Heart left ventricle (tissue), 16 donors: ENCODE measurements at regions of chr7 and their contacts with region 1.

Region 1: GRCh38 chr7:13279854-13280435 is 592.5 kb downstream of the ARL4A start:
- DNase-seq: no peak
- ATAC-seq: no peak
- H3K4me3 ChIP-seq: no peak overlapping the region
- H3K27ac ChIP-seq: no peak overlapping the region
- H3K4me1 ChIP-seq: no peaks in the 10 kb centered on the region
- H3K27me3 ChIP-seq: no peaks in the 10 kb centered on the region
- CTCF ChIP-seq: peak; percentile 29 to 66 (median 52)
- POLR2A ChIP-seq: no peak

Region 2: DNA sequence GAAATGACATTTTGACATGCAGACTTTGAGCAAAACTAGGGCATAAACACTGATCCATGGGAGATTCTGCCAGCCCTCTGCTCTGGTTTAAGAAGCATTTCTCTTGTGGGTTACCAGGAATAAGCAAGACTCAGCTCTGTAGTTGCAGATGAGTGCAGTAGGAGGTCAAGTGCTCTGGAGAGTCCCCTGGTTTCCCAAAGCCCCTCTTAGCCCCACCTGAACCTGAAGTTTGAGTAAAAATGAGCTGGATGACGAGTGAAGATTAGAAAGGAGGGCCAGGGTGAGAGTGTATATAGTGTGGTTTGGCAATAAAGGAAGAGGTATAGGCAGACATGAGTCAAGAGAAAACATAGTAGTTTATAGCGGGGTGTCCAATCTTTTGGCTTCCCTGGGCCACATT is 372.2 kb before region 1 on chr7:
- intact Hi-C with region 1: no loop called
- DNase-seq: no peak
- ATAC-seq: no peak
- H3K4me3 ChIP-seq: no peak overlapping the region
- H3K27ac ChIP-seq: no peak overlapping the region
- H3K4me1 ChIP-seq: no peaks in the 10 kb centered on the region
- H3K27me3 ChIP-seq: no peaks in the 10 kb centered on the region
- CTCF ChIP-seq: no peak
- POLR2A ChIP-seq: no peak

Region 3: DNA sequence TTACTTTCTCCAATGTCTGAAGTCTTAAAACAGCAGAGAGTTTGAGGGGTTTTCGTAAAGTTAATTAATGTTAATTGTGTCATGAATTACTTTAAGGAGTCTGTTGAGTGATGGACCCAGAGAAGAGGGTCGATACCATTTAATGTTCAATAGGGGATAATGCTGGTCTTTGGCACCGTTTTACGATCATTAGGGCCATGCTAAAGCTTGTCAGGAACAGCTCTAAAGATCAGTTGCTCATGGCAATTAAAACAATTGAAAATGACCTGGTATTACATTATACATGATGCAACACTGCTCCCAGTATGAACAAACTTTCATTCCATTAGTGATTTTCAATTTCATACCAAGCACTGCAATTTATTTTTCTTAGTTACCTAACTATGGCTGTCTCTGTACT is 412.6 kb after region 1 on chr7:
- intact Hi-C with region 1: no loop called
- DNase-seq: no peak
- ATAC-seq: no peak
- H3K4me3 ChIP-seq: no peak overlapping the region
- H3K27ac ChIP-seq: no peak overlapping the region
- H3K4me1 ChIP-seq: no peaks in the 10 kb centered on the region
- H3K27me3 ChIP-seq: no peaks in the 10 kb centered on the region
- CTCF ChIP-seq: no peak
- POLR2A ChIP-seq: no peak

Region 4: GRCh38 chr7:13742811-13743210 is 462.9 kb after region 1 on chr7:
- intact Hi-C with region 1: loop called in 8 of 10 experiments (anchors 5 to 10 kb)
- DNase-seq: peak in 3 of 5 donors; percentile 16 to 48 (median 29)
- ATAC-seq: peak in 3 of 4 donors; percentile 75 to 79 (median 78)
- H3K4me3 ChIP-seq: no peak overlapping the region
- H3K27ac ChIP-seq: peak overlapping the region in 1 of 12 donors; percentile 12
- H3K4me1 ChIP-seq: peaks cover 0 to 13% (median 7%) of the 10 kb centered on the region in 12 donors
- H3K27me3 ChIP-seq: no peaks in the 10 kb centered on the region
- CTCF ChIP-seq: peak; percentile 24 to 66 (median 52)
- POLR2A ChIP-seq: no peak

Region 5: DNA sequence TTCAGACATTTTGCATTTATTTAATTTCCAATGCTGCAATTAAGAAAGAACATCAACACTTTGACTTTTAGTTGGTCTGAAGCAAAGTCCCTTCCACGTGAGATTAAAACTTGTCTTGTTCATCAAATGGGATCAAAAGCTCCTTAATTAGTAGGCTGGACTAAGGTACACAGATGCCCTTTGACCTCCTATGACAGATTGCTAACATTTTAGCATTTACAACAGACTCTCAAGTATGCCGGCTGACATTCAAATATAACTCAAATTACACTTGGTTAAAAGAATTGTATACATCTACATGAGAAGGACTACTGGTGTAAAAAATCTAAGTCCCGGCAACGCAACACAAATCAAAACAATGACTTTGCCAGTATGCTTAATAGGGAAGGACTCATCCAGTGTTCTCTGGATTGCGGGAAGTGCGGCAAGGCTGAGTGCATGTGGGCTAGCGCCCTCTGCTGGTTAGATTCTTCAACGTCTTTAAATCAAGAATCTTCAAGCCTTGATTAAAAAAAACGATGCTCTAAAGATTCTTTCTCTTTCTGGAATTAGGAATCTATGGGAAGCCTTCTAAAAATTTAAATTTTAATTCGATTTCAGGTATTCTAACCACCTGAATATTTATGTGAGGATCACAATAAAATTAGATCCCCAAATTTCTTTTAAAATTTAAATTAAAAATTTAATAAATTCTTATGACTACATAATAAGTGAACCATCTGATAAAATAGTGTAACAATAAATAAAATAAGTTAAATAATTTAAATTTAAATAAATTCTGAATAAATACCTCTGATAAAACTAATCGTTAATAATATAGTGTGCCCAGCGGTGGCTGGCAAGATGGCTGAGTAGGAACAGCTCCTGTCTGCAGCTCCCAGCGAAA is 1177.9 kb after region 1 on chr7:
- intact Hi-C with region 1: loop called in 8 of 10 experiments (anchors 2 to 10 kb)
- DNase-seq: peak; percentile 66 to 72 (median 68)
- ATAC-seq: peak; percentile 73 to 85 (median 84)
- H3K4me3 ChIP-seq: peak overlapping the region in 3 of 12 donors; percentile 1 to 31 (median 22)
- H3K27ac ChIP-seq: peak overlapping the region in 2 of 12 donors; percentile 34 to 54
- H3K4me1 ChIP-seq: peaks cover 0 to 5% (median 0%) of the 10 kb centered on the region in 12 donors
- H3K27me3 ChIP-seq: no peaks in the 10 kb centered on the region
- CTCF ChIP-seq: peak; percentile 81 to 93 (median 88)
- POLR2A ChIP-seq: no peak

Region 6: DNA sequence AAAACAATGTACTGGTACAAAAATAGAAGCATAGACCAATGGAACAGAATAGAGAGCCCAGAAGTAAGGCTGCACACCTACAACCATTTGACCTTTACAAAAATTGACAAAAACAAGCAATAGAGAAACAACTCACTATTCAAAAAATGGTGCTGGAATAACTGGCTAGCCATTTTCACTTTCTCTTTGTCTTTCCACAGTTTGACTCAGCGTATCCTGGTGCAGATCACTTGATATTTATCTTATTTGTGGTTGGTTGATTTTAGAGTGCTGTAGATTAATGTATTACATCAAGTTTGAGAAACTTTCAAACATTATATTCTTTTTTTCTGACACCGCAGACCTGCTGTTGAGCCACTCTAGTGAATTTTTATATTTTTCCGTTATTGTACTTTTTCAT is 1241.2 kb after region 1 on chr7:
- intact Hi-C with region 1: no loop called
- DNase-seq: no peak
- ATAC-seq: no peak
- H3K4me3 ChIP-seq: no peak overlapping the region
- H3K27ac ChIP-seq: no peak overlapping the region
- H3K4me1 ChIP-seq: no peaks in the 10 kb centered on the region
- H3K27me3 ChIP-seq: no peaks in the 10 kb centered on the region
- CTCF ChIP-seq: no peak
- POLR2A ChIP-seq: no peak

Region 7: DNA sequence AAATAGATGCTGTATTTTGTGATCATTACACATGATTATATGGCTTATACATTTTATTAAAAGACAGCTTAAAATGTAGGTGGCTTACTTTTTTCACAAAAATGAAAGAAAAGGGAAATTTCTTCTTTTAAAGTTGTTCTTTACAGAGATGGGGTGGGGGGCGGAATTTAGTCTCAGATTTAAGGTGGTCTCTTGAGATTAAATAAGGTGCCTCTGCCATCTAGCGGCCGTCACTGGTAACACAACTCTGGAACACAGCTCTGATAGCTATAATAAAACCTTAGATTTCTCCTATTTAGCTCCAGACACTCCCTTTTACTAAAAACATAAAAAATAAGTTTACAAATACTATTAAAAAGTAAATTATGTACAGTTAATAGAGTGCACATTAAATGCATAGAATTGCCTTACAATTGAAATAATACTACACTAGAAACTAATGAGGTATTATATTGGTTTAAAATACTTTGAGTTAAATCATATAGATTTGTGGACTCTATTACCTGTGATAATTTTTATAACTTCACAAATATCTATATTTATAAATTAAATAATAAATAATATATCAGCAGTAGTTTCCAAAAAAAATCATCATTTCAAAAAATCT is 1411.8 kb after region 1 on chr7:
- intact Hi-C with region 1: loop called (anchors 2 to 5 kb)
- DNase-seq: peak; percentile 10 to 58 (median 33)
- ATAC-seq: no peak
- H3K4me3 ChIP-seq: no peak overlapping the region
- H3K27ac ChIP-seq: no peak overlapping the region
- H3K4me1 ChIP-seq: peaks cover 0 to 23% (median 0%) of the 10 kb centered on the region in 12 donors
- H3K27me3 ChIP-seq: peaks cover 0 to 3% (median 0%) of the 10 kb centered on the region in 9 donors
- CTCF ChIP-seq: peak; percentile 74 to 92 (median 86)
- POLR2A ChIP-seq: no peak